Heart right ventricle (tissue), 16 donors: ENCODE measurements at regions of chr12 and their contacts with region 1.

Region 1: DNA sequence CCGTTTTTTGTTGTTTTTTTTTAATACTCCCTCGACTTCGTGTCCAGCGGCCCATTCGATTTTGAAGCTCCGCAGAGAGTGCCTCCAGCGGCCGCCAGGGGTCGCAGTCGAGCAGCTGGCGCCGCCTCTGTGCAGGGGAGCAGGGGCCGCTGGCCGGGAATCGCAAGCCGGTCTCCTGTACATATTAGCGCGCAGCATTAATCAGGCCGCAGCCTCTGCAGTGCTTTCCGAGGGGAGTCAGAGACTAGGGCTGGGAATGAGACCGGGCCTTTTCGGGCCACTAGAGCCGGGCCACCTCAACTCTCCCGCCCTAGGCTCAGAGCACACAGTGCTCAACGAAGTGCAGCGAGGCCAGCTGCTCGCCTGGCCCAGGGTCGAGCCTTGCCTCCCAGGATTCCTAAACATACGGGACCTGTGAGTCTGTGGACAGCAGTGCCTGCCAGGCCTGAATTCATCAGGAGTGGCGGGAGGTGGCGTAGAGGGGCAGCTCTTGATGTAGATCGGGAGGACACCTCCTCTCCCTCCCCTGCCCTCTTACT is 81.8 kb downstream of the EMP1 start:
- DNase-seq: peak; percentile 58 to 77
- ATAC-seq: peak; percentile 91 to 96 (median 95)
- H3K4me3 ChIP-seq: peak overlapping the region in 2 of 10 donors; percentile 10 to 16
- H3K27ac ChIP-seq: peak overlapping the region in 1 of 10 donors; percentile 35
- H3K4me1 ChIP-seq: peaks cover 0 to 13% (median 10%) of the 10 kb centered on the region in 9 donors
- H3K27me3 ChIP-seq: peaks cover 0 to 49% (median 20%) of the 10 kb centered on the region in 7 donors
- CTCF ChIP-seq: peak; percentile 91 to 99 (median 98)

Region 2: GRCh38 chr12:13211859-13212664 is 66.3 kb before region 1 on chr12:
- intact Hi-C with region 1: no loop called
- DNase-seq: peak in 1 of 2 donors; percentile 65
- ATAC-seq: peak in 2 of 8 donors; percentile 24 to 52
- H3K4me3 ChIP-seq: no peak overlapping the region
- H3K27ac ChIP-seq: peak overlapping the region in 1 of 10 donors; percentile 34
- H3K4me1 ChIP-seq: peaks cover 11 to 51% (median 47%) of the 10 kb centered on the region in 9 donors
- H3K27me3 ChIP-seq: no peaks in the 10 kb centered on the region
- CTCF ChIP-seq: peak; percentile 57 to 83 (median 79)

Region 3: DNA sequence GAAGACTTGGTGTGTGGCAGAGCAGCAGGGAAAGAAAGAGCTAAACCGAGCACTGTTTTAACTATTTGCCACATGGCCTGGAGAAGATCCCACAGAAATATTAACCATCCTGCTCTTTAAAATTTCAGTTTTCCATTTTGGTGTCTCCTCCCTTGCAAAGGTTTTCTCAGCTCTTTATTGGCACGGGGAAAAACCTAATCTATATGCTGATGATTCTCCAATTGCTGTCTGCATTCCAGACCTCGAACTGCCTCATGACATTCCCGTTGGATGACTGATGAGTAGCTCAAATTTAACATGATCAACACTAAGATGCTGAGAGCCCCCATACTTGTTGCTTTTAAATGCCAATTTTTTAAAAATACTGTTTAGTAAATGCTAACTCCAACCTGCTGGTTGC is 33.2 kb after region 1 on chr12:
- intact Hi-C with region 1: loop called in 1 of 10 experiments (anchors 1 kb)
- DNase-seq: no peak
- ATAC-seq: no peak
- H3K4me3 ChIP-seq: no peak overlapping the region
- H3K27ac ChIP-seq: no peak overlapping the region
- H3K4me1 ChIP-seq: no peaks in the 10 kb centered on the region
- H3K27me3 ChIP-seq: peaks cover 0 to 3% (median 0%) of the 10 kb centered on the region in 7 donors
- CTCF ChIP-seq: no peak

Region 4: GRCh38 chr12:13534645-13535398 is 256.5 kb after region 1 on chr12:
- intact Hi-C with region 1: loop called in 9 of 10 experiments (anchors 1 to 10 kb)
- DNase-seq: peak; percentile 48 to 66
- ATAC-seq: peak in 7 of 8 donors; percentile 43 to 72 (median 56)
- H3K4me3 ChIP-seq: peak overlapping the region in 7 of 10 donors; percentile 14 to 40 (median 35)
- H3K27ac ChIP-seq: peak overlapping the region in 1 of 10 donors; percentile 26
- H3K4me1 ChIP-seq: peaks cover 0 to 5% (median 0%) of the 10 kb centered on the region in 9 donors
- H3K27me3 ChIP-seq: peaks cover 0 to 16% (median 4%) of the 10 kb centered on the region in 7 donors
- CTCF ChIP-seq: peak; percentile 60 to 97 (median 87)

Region 5: DNA sequence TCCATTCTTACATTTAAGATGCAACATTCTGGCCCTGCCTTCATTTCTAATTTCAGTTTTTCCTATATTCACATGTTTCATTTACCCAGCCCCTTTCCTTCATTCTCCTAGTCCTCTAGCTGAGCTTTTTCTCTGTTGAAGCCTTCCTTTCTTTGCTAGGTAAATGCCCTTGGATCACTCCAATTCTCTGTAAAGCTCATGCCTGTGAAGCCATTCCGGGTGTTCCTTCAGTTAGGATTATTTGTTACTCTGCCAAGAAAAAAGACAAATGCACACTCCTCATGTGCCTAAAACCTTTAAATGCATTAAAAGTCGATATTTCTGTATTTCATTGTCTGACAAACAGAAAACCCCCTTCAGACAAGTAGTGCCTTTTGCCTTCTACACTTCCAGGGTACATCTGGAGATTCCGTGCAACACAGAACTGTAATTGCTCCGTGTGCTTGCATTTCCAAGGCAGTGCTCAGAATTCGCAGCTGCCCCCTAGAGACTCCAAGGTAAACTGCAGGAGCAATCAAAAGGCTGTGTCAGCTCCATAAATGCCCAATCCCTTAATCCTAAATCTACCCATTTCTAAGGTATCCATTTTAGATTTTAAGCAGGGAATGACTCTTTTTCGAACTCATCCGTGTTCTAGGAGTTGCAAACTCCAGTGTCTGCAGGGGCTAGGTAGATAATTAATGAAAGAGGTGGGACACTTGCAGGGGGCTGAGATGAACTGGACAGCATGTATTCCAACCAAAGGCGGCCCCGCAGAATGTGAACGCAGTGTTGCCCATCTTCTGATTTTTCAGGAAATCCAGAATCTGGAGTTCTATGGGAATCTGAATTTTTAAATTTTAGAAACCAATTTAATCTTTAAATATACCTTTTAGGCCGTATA is 382.9 kb after region 1 on chr12:
- intact Hi-C with region 1: loop called in 9 of 10 experiments (anchors 2 to 10 kb)
- DNase-seq: peak; percentile 13 to 23
- ATAC-seq: peak in 7 of 8 donors; percentile 46 to 79 (median 67)
- H3K4me3 ChIP-seq: no peak overlapping the region
- H3K27ac ChIP-seq: no peak overlapping the region
- H3K4me1 ChIP-seq: no peaks in the 10 kb centered on the region
- H3K27me3 ChIP-seq: peaks cover 0 to 42% (median 5%) of the 10 kb centered on the region in 7 donors
- CTCF ChIP-seq: peak; percentile 43 to 84 (median 80)